Gastrocnemius medialis (tissue), 4 donors: ENCODE measurements at regions of chr7 and their contacts with region 1.

Region 1: DNA sequence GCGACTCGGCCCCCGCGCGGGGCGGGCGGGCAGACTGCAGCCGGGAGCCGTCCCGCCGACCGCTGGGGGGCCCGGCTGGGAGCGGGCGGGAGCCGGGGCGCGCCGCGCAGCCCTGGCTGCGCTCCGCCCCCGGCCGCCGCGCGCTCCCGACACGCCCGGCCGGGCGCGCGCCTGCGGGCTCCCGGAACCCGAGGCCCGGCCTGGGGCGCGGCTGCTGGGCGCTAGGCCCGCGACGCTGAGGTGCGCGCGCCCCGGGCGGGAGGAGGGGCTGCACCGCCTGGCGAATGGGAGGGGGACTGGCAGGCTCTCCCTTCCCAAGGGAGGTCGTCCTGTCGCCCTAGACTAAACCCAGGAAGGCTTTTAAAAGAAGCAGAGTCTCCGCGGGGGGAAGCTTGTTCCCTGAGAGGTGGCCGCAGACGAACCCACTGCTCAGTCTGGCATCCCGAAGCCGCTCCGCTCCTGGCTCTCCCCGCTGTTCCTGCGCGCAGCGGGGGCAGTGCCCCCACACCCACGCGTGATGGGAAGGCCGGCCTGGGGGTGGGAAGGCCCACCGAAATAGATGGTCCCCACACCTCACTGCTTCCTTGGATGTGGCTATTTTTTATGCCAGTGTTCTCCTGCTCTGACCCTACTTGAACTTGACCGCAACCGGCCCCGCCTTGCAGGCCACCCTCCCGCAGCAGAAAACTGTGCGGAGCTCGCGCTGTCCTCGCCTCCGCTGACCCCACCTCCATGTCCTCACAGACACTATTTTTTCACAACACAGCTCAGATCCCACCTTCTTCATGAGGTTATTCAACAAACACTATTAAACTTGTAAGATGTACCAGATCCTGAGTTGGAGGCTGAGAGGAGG is at the start of gene VOPP1:
- DNase-seq: peak in 1 of 2 donors; percentile 58
- ATAC-seq: peak; percentile 69 to 75
- H3K4me3 ChIP-seq: peak within 1 kb of the TSS; percentile 83 to 97 (median 91)
- H3K27ac ChIP-seq: peak within 1 kb of the TSS; percentile 91 to 96 (median 94)
- H3K4me1 ChIP-seq: peaks cover 38 to 56% of the 10 kb centered on the region in 2 donors
- H3K27me3 ChIP-seq: no peaks in the 10 kb centered on the region
- CTCF ChIP-seq: no peak
- POLR2A ChIP-seq: peak in 1 of 2 donors; percentile 25
- total RNA-seq, gene VOPP1: 17.3 to 27.9 (median 26.5) TPM

Region 2: DNA sequence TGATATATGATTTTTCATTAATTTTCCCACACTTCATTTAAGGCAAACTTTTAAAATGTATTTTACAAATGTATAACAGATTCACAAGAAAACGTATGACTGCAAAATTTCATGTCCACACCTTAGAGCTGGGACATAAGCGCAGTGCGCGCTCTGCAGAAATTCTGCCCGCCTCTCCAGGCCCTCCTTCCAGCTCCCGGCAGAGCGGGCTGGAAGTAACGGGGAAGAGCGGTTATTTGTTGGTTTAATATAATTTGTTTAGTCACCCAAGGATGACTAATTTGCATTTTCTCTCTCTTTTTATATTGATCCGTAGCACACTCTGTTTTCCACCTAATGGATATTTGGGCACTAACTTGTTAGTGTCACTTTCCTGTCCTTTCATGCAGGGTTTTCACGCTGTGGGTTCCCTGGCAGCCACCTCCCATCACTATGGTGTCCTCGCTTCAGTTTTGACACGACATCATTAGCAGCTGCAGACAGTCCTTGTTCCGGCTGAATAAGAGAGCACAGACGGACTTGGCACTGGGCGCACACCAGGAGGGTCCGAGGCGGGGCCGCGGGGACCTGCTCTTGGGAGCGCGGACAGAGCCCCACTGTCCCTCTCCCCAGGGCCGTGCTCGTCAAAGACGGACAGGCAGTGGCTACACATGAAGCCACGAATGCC is 684.4 kb before region 1 on chr7:
- in situ Hi-C with region 1: no loop called
- intact Hi-C with region 1: no loop called
- DNase-seq: no peak
- ATAC-seq: peak; percentile 45 to 53
- H3K4me3 ChIP-seq: peak overlapping the region; percentile 30 to 49 (median 37)
- H3K27ac ChIP-seq: no peak overlapping the region
- H3K4me1 ChIP-seq: no peaks in the 10 kb centered on the region
- H3K27me3 ChIP-seq: peaks cover 0 to 9% (median 5%) of the 10 kb centered on the region in 3 donors
- CTCF ChIP-seq: no peak
- POLR2A ChIP-seq: no peak

Region 3: GRCh38 chr7:55521917-55522902 is 50.4 kb before region 1 on chr7:
- in situ Hi-C with region 1: no loop called
- intact Hi-C with region 1: loop called (anchors 2 kb)
- DNase-seq: peak in 1 of 2 donors; percentile 62
- ATAC-seq: peak; percentile 3 to 51
- H3K4me3 ChIP-seq: no peak overlapping the region
- H3K27ac ChIP-seq: peak overlapping the region; percentile 39 to 65 (median 42)
- H3K4me1 ChIP-seq: peaks cover 58 to 66% of the 10 kb centered on the region in 2 donors
- H3K27me3 ChIP-seq: no peaks in the 10 kb centered on the region
- CTCF ChIP-seq: no peak
- POLR2A ChIP-seq: no peak

Region 4: DNA sequence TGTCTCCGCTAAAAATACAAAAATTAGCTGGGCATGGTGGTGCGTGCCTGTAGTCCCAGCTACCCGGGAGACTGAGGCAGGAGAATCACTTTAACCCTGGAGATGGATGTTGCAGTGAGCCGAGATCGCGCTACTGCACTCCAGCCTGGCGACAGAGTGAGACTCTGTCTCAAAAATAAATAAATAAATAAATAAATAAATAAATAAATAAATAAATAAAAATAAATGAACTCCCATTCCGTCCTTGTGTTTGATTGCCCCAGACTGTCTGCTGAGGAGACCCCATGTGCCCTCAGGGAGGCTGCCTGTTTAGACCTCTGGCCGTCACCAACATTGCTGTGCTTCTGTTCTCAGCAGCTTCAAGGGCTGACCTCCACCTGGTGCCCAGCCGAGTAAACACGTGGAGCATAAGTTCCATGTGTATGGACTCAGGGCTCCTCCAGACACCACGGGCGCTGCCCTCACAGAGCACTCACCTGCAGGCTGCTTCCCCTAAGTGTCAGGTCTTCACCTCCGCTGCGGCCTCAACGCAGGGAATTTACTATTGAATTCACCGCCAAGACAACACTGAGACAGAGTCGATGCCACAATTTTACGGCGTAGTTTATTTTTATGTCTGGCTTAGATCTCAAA is 32.3 kb before region 1 on chr7:
- in situ Hi-C with region 1: no loop called
- intact Hi-C with region 1: loop called (anchors 5 kb)
- DNase-seq: no peak
- ATAC-seq: no peak
- H3K4me3 ChIP-seq: no peak overlapping the region
- H3K27ac ChIP-seq: no peak overlapping the region
- H3K4me1 ChIP-seq: peaks cover 33 to 61% of the 10 kb centered on the region in 2 donors
- H3K27me3 ChIP-seq: no peaks in the 10 kb centered on the region
- CTCF ChIP-seq: no peak
- POLR2A ChIP-seq: no peak

Region 5: GRCh38 chr7:55552320-55553023 is 20.1 kb before region 1 on chr7:
- in situ Hi-C with region 1: no loop called
- intact Hi-C with region 1: loop called (anchors 1 kb)
- DNase-seq: peak; percentile 66 to 80
- ATAC-seq: peak; percentile 88
- H3K4me3 ChIP-seq: peak overlapping the region; percentile 37 to 53 (median 45)
- H3K27ac ChIP-seq: peak overlapping the region; percentile 90 to 96 (median 92)
- H3K4me1 ChIP-seq: peaks cover 87 to 89% of the 10 kb centered on the region in 2 donors
- H3K27me3 ChIP-seq: no peaks in the 10 kb centered on the region
- CTCF ChIP-seq: no peak
- POLR2A ChIP-seq: peak; percentile 9 to 21

Region 6: DNA sequence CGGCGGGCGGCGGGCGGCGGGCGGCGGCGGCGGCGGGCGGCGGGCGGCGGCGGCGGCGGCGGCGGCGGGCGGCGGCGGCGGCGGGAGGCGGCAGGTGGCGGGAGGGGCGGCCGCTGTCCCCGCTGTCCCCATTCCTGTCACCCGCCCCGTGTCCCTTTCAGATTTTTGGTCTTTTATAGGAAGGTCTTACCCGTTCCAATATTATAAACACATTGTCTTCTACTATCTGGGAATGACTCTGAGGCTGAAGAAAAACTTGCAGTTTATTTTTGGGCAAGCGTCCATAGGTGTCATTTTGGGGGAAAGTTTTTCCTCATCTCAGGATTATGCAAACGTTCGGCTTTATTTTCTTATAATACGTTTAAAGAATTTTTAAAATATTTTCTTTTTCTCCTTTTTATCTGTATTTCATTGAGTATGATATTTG is 315.2 kb after region 1 on chr7:
- in situ Hi-C with region 1: no loop called
- intact Hi-C with region 1: loop called (anchors 10 kb)
- DNase-seq: no peak
- ATAC-seq: no peak
- H3K4me3 ChIP-seq: peak overlapping the region; percentile 54 to 83 (median 60)
- H3K27ac ChIP-seq: peak overlapping the region; percentile 75 to 81 (median 79)
- H3K4me1 ChIP-seq: no peaks in the 10 kb centered on the region
- H3K27me3 ChIP-seq: no peaks in the 10 kb centered on the region
- CTCF ChIP-seq: no peak
- POLR2A ChIP-seq: no peak

Region 7: DNA sequence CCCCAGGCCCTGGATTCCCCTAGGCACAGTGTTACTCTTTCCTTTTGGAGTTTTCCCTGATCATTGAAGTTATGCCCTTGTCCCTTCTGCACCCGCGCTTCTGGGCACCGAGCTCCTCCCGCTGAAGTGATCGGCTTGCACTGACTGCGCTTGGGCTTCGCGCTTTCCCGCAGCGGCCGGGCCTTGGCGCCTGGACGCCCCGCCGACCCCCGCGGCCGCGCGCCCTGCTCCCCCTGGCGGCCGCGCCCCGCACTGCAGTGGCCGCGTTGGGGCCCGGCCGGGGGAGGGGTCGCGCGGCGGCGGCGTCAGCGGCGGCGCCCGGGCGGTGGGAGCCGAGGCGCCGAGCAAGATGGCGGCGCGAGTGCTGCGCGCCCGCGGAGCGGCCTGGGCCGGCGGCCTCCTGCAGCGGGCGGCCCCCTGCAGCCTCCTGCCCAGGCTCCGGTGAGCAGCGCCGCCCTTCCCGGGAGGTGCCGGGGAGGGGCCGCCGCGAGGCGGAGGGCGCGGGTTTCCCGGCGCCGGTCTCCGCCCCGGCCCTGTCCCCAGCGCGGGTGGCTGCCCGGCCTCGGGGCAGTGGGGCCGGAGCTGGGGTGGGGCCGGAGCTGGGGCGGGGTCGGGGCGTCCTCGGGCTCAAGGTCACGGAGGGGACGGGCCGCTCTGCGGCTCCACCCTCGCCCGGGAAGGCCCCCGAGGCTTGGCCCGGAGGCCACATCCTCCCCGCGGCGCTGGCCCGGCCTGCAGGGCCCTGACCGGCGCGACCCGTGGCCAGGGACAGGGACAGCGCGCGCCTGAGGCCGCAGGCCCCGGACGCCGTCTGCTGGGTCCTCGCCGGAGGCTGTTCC is 391.9 kb after region 1 on chr7 and contains the start of gene NIPSNAP2:
- in situ Hi-C with region 1: no loop called
- intact Hi-C with region 1: loop called (anchors 10 kb)
- DNase-seq: peak; percentile 67 to 83
- ATAC-seq: peak; percentile 58 to 72
- H3K4me3 ChIP-seq: peak within 1 kb of the TSS; percentile 68 to 71 (median 70)
- H3K27ac ChIP-seq: peak within 1 kb of the TSS; percentile 96 to 98 (median 97)
- H3K4me1 ChIP-seq: peaks cover 42 to 47% of the 10 kb centered on the region in 2 donors
- H3K27me3 ChIP-seq: no peaks in the 10 kb centered on the region
- CTCF ChIP-seq: peak; percentile 36 to 96 (median 86)
- POLR2A ChIP-seq: peak; percentile 79 to 91
- total RNA-seq, gene NIPSNAP2: 234 to 382 (median 354) TPM

Region 8: GRCh38 chr7:56106108-56107073 is 533.8 kb after region 1 on chr7 and contains the start of gene CHCHD2:
- in situ Hi-C with region 1: no loop called
- intact Hi-C with region 1: loop called (anchors 10 kb)
- DNase-seq: peak; percentile 96 to 98
- ATAC-seq: peak; percentile 99 to 100
- H3K4me3 ChIP-seq: peak within 1 kb of the TSS; percentile 75 to 95 (median 86)
- H3K27ac ChIP-seq: peak within 1 kb of the TSS; percentile 92 to 98 (median 94)
- H3K4me1 ChIP-seq: peaks cover 18 to 19% of the 10 kb centered on the region in 2 donors
- H3K27me3 ChIP-seq: no peaks in the 10 kb centered on the region
- CTCF ChIP-seq: peak in 1 of 5 experiments; percentile 2
- POLR2A ChIP-seq: peak; percentile 92 to 93
- total RNA-seq, gene CHCHD2: 540 to 822 (median 655) TPM